PC-3 (cell line): ENCODE measurements at regions of chr18 and their contacts with region 1.

Region 1: DNA sequence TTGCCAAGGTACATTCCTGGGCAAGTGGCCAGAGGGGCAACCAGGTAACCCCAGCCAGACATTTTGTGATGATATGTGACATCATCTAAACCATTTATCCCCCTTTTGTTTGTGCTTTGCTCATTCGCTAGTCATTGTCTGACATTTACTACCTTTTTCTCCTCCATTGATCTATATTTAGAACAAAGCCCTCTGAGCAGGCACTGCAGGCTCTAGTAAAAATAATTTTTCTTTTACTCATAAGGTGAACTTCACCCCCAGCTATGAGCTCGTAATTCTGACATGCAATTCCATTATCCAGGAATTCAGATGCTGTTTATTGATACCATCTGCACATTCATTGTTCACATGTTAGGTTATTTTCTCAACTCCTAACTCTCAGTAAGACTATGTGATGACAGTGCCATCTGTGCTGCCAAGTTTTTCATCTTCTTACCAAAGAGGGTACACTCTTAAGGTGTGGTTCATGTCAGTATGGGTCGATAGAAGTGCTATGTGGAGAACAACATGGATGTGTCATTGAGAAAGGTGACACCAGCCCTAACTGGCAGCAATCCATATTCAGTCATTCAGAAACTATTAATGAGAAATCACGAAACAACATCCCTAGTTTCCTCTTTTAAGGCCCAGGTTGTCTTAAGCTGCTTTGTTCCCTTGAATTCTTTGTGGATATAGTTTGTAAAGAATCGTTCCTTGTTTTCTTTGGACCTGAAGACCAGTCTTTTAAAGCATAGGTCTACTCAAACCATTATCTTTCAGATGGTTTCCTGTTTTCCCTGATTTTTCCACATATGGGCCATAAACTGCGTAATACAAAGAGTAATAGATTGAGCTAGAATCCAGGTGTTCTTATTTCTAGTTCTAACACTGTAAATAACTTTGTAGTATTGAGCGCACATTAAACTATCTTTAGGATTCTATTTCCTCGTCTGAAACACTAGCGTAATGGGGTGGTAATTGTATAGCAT is 978.1 kb upstream of the CDH2 start:
- DNase-seq: peak; percentile 97
- ATAC-seq: peak; percentile 68
- H3K4me3 ChIP-seq: peak overlapping the region; percentile 47
- H3K27ac ChIP-seq: peak overlapping the region; percentile 95
- H3K4me1 ChIP-seq: peaks cover 49% of the 10 kb centered on the region
- H3K27me3 ChIP-seq: no peaks in the 10 kb centered on the region
- CTCF ChIP-seq: no peak

Region 2: GRCh38 chr18:29123706-29124530 is 31.1 kb before region 1 on chr18:
- CTCF ChIA-PET with region 1: no interaction called
- POLR2A ChIA-PET with region 1: no interaction called
- intact Hi-C with region 1: no loop called
- DNase-seq: no peak
- ATAC-seq: no peak
- H3K4me3 ChIP-seq: no peak overlapping the region
- H3K27ac ChIP-seq: no peak overlapping the region
- H3K4me1 ChIP-seq: no peaks in the 10 kb centered on the region
- H3K27me3 ChIP-seq: no peaks in the 10 kb centered on the region
- CTCF ChIP-seq: no peak

Region 3: DNA sequence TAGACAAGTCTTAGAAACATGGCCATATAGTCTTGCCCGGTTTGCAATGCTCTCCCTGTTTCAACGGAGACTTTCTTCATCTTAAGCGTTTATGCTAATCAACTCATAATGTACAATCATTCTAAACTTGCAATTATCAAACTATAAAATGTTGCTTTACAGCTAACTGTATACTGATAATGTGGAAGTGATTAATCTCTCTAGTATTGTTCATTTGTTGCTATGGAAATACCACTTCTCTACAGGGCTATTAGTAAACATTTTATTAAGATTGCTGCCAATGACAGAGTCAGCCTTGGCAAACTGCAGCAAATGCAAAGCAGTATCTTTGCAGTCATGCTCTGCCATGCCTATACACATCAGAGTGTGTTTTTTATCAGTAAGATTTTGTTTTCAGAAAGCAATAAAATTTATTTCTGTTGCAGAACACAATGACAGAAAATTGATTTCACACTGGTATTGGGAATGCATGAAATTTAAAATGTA is 223.7 kb after region 1 on chr18:
- CTCF ChIA-PET with region 1: no interaction called
- POLR2A ChIA-PET with region 1: no interaction called
- intact Hi-C with region 1: loop called (anchors 5 kb)
- DNase-seq: peak; percentile 45
- ATAC-seq: peak; percentile 77
- H3K4me3 ChIP-seq: no peak overlapping the region
- H3K27ac ChIP-seq: no peak overlapping the region
- H3K4me1 ChIP-seq: peaks cover 21% of the 10 kb centered on the region
- H3K27me3 ChIP-seq: no peaks in the 10 kb centered on the region
- CTCF ChIP-seq: no peak

Region 4: DNA sequence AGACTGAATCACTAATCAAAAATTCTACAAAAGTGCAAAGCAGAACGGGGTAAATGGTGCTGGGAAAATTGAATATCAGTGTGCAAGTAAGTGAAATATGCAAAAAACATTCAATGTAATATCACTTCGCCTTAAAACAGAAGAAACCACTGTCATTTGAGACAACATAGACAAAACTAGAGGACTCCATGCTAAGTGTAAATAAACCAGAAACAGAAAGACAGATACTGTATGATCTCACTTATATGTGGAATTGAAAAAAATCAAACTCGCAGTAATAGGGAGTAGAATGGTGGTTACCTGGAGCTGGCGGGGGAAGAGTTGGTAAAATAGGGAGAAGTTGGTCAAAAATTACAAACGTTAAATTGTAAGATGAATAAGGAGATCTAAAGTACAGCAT is 441.9 kb after region 1 on chr18:
- CTCF ChIA-PET with region 1: no interaction called
- POLR2A ChIA-PET with region 1: no interaction called
- intact Hi-C with region 1: no loop called
- DNase-seq: no peak
- ATAC-seq: no peak
- H3K4me3 ChIP-seq: no peak overlapping the region
- H3K27ac ChIP-seq: no peak overlapping the region
- H3K4me1 ChIP-seq: no peaks in the 10 kb centered on the region
- H3K27me3 ChIP-seq: no peaks in the 10 kb centered on the region
- CTCF ChIP-seq: no peak

Region 5: GRCh38 chr18:29853126-29853525 is 698.1 kb after region 1 on chr18:
- CTCF ChIA-PET with region 1: no interaction called
- POLR2A ChIA-PET with region 1: no interaction called
- intact Hi-C with region 1: loop called (anchors 10 kb)
- DNase-seq: peak; percentile 30
- ATAC-seq: 0 out of 2 replicates have a peak, but pooled peaks have one; percentile 44
- H3K4me3 ChIP-seq: no peak overlapping the region
- H3K27ac ChIP-seq: no peak overlapping the region
- H3K4me1 ChIP-seq: no peaks in the 10 kb centered on the region
- H3K27me3 ChIP-seq: no peaks in the 10 kb centered on the region
- CTCF ChIP-seq: no peak